Psoas muscle (tissue), 8 donors: ENCODE measurements at regions of chr10 and their contacts with region 1.

Region 1: DNA sequence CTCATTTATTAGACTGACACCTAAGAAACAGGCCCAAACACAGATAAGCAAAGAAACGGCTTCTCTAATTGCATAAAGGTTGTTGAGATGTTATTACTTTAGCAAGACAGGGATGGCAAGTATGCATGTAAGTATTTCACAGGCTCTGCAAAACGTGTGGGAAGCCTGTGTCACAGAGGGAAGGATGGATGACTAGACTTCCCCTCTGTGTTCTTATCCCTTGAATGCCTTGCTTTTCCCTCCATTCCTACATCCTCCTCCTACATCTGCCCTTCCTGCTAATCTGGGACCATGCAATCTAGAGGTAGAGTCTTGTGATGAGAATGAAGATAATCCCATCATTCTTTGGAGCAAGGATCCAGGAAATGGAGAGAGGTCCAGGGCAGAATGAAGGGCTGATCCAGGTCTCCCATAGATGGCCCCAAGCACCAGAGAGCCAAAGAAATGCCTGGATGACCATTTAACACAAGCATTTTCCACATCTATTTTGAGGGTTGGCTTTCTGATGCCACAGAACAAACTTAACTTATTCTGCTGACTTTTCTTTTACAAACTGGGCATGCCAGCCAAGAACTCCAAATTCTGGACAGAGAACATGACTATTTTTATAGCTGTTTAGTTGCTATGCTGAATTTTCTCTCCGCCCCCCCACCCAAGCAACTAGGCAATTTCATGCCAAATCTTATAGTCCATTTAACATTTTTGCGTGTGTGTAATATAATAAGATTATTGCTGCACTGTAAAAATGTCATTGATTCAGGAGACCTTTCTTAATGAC is 48.1 kb downstream of the NRP1 start:
- DNase-seq: no peak
- ATAC-seq: no peak
- H3K4me3 ChIP-seq: no peak overlapping the region
- H3K27ac ChIP-seq: peak overlapping the region; percentile 54
- H3K4me1 ChIP-seq: peaks cover 64% of the 10 kb centered on the region
- H3K27me3 ChIP-seq: no peaks in the 10 kb centered on the region
- CTCF ChIP-seq: no peak

Region 2: GRCh38 chr10:32957341-32958084 is 328.8 kb before region 1 on chr10:
- intact Hi-C with region 1: no loop called
- DNase-seq: peak; percentile 68 to 82
- ATAC-seq: peak; percentile 31 to 43 (median 37)
- H3K4me3 ChIP-seq: peak overlapping the region; percentile 95
- H3K27ac ChIP-seq: peak overlapping the region; percentile 98
- H3K4me1 ChIP-seq: peaks cover 69% of the 10 kb centered on the region
- H3K27me3 ChIP-seq: no peaks in the 10 kb centered on the region
- CTCF ChIP-seq: no peak

Region 3: GRCh38 chr10:33321513-33321912 is 35.2 kb after region 1 on chr10:
- intact Hi-C with region 1: loop called in 1 of 2 experiments (anchors 5 kb)
- DNase-seq: no peak
- ATAC-seq: peak; percentile 12 to 65 (median 35)
- H3K4me3 ChIP-seq: peak overlapping the region; percentile 10
- H3K27ac ChIP-seq: peak overlapping the region; percentile 62
- H3K4me1 ChIP-seq: peaks cover 79% of the 10 kb centered on the region
- H3K27me3 ChIP-seq: no peaks in the 10 kb centered on the region
- CTCF ChIP-seq: no peak

Region 4: DNA sequence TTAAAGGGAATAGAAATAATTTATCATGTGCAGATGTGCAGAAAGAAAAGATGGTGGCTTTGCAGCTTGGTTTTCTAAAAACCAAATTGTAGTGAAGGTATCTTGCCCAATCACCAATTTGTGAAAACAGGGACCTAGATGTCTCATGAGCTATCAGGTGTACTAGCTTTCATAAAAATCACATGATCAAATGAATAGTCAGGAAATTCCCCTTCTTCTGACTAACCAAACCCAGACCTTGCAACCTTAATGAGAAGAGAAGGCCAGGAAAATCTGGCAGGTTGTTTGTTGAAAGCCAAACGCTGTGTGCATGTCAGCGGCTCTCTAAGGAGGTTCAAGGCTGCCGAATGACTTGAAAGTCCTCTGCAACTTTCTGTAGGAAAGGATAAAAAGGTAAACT is 352.5 kb after region 1 on chr10:
- intact Hi-C with region 1: no loop called
- DNase-seq: no peak
- ATAC-seq: no peak
- H3K4me3 ChIP-seq: no peak overlapping the region
- H3K27ac ChIP-seq: no peak overlapping the region
- H3K4me1 ChIP-seq: no peaks in the 10 kb centered on the region
- H3K27me3 ChIP-seq: no peaks in the 10 kb centered on the region
- CTCF ChIP-seq: no peak